Sigmoid colon (tissue), 7 donors: ENCODE measurements at regions of chr5 and their contacts with region 1.

Region 1: GRCh38 chr5:40736103-40736875 is 19.5 kb downstream of the TTC33 start:
- DNase-seq: no peak
- H3K4me3 ChIP-seq: no peak overlapping the region
- H3K27ac ChIP-seq: no peak overlapping the region
- H3K4me1 ChIP-seq: peaks cover 0 to 30% (median 26%) of the 10 kb centered on the region in 4 donors
- H3K27me3 ChIP-seq: no peaks in the 10 kb centered on the region
- CTCF ChIP-seq: peak; percentile 44 to 71 (median 56)
- EP300 ChIP-seq: no peak
- POLR2A ChIP-seq: no peak

Region 2: DNA sequence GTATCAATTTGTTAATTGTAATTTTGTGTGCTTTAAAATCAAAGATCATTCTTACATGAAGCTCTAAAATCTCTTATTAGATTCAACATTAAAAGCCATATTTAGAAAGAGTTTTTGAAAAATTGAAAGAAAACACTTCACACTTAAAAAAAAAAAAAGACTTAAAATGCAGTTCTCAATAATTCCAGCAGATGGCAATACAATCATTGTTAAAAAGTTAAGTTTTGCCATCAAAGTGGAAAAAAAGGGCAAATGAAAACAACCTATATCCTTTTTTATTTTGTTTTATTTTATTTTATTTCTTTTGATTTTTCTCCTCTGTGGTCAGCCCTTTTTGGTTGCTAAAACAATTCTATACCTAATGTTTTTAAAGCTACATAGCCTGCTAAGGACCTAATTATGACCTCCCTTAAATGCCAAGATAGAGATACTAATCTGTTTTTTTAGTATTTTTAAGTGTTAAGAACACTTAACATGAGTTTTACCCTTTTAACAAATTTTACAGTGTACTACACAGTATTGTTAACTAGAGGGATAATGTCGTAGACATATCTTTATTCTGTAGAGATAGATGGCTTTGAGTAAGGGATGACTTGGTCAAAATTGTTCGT is 1157.3 kb before region 1 on chr5:
- intact Hi-C with region 1: loop called (anchors 5 kb)
- DNase-seq: no peak
- H3K4me3 ChIP-seq: no peak overlapping the region
- H3K27ac ChIP-seq: no peak overlapping the region
- H3K4me1 ChIP-seq: no peaks in the 10 kb centered on the region
- H3K27me3 ChIP-seq: no peaks in the 10 kb centered on the region
- CTCF ChIP-seq: peak in 3 of 4 experiments; percentile 28 to 71 (median 43)
- EP300 ChIP-seq: no peak
- POLR2A ChIP-seq: no peak

Region 3: GRCh38 chr5:39714036-39714698 is 1022.1 kb before region 1 on chr5:
- intact Hi-C with region 1: loop called (anchors 5 kb)
- DNase-seq: no peak
- H3K4me3 ChIP-seq: no peak overlapping the region
- H3K27ac ChIP-seq: no peak overlapping the region
- H3K4me1 ChIP-seq: peaks cover 0 to 5% (median 0%) of the 10 kb centered on the region in 4 donors
- H3K27me3 ChIP-seq: no peaks in the 10 kb centered on the region
- CTCF ChIP-seq: peak in 3 of 4 experiments; percentile 52 to 69 (median 58)
- EP300 ChIP-seq: no peak
- POLR2A ChIP-seq: no peak

Region 4: DNA sequence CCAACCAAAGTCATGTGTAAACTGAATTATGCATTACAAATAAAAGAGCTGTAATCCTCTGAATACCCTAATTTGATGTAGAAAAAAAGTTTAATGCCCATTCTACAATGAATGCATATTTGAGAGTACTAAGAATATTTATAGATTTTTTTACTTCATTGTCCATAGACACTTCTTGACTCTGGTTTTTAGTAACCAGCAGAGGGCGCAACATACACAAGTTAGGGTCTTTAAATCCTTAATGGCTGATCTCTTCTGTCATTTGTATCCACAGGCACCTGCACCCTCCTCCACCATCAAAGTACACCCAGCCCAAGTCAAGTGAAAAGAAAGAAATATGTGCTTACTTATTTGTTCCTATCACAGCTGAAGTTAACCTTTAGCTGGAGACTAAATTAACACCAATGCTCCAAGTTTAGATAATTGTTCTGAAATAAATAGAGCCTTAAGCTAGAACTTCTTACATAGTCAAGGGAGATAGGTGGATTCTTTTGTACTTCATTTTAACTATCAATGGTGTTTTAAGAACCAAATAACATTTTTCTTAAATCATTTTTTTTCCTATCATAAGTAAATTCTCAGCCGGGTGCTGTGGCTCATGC is 787.3 kb before region 1 on chr5:
- intact Hi-C with region 1: loop called (anchors 2 kb)
- DNase-seq: peak; percentile 68
- H3K4me3 ChIP-seq: no peak overlapping the region
- H3K27ac ChIP-seq: no peak overlapping the region
- H3K4me1 ChIP-seq: no peaks in the 10 kb centered on the region
- H3K27me3 ChIP-seq: no peaks in the 10 kb centered on the region
- CTCF ChIP-seq: peak; percentile 27 to 67 (median 44)
- EP300 ChIP-seq: no peak
- POLR2A ChIP-seq: no peak

Region 5: DNA sequence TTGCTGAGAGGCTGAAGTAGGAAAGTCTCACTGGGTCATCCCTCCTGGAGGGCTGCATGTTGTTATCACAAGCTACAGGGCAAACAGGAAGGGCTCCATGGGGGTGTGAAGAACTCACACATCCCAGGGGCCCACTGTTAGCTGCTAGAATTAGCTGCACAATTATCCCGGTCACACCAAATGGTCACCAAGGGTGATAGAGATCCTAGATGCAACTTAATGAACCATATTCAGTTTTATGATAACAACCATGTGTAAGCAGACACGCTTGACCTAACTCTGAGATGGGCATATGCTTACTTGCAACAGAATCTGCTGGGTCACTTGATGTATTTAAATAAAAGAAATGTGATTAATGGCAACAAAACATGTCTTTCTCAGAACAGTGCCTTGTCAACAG is 620.5 kb after region 1 on chr5:
- intact Hi-C with region 1: no loop called
- DNase-seq: no peak
- H3K4me3 ChIP-seq: no peak overlapping the region
- H3K27ac ChIP-seq: no peak overlapping the region
- H3K4me1 ChIP-seq: no peaks in the 10 kb centered on the region
- H3K27me3 ChIP-seq: no peaks in the 10 kb centered on the region
- CTCF ChIP-seq: no peak
- EP300 ChIP-seq: no peak
- POLR2A ChIP-seq: no peak